ENCODE measurements at regions of chr5 and their contacts with region 1.

Region 1: GRCh38 chr5:152142840-152143469 is 218.3 kb upstream of the GLRA1 start:
- DNase-seq: peak; percentile 46

Region 2: DNA sequence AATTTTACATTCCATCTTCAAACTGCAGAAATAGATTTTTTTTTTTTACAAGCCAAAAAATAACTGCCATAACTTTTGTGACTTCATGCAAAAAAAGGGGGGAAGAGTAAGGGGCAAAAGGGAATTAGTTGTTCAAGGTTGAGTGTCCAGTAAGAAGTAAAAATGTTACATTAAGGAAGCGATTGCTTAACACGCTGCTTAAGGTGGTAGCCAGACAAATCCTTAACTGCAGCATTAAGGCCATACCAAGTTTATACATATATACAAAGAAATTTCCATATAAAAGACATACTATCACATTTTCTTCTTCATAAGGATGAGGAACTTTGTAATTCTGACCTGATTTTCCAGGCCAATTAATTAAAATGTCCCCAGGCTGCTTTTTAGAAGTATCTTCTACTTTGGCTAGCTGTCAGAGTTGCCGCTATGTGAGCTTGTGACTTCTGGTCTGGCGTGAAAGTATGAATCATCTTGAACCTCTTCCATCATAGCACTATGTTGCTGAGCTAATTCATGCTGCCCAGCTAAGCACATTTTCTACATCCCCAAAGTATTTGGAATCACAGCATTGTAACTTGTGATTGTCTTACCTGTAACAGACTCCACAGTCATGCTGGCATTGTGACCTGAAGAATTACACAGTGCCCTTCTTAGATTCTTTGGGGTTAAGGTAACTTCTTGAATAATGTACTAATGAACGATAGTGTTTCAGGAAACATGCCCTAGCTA is 331.2 kb before region 1 on chr5:
- in situ Hi-C with region 1: loop called (anchors 25 kb)
- DNase-seq: no peak

Measured in ACHN (cell line).